K562 (cell line): ENCODE measurements at regions of chr2 and their contacts with region 1.

Region 1: GRCh38 chr2:85538486-85539360 is at the start of gene MAT2A:
- DNase-seq: peak; percentile 88 to 95 (median 91)
- ATAC-seq: peak; percentile 73
- H3K4me3 ChIP-seq: peak within 1 kb of the TSS; percentile 68
- H3K27ac ChIP-seq: peak within 1 kb of the TSS; percentile 100
- H3K4me1 ChIP-seq: peaks cover 9 to 24% of the 10 kb centered on the region in 2 experiments
- H3K27me3 ChIP-seq: no peaks in the 10 kb centered on the region
- CTCF ChIP-seq: peak; percentile 78 to 86 (median 82)
- EP300 ChIP-seq: peak; percentile 70
- POLR2A ChIP-seq: peak; percentile 100
- RAD21 ChIP-seq: peak; percentile 60 to 72
- polyA plus RNA-seq, gene MAT2A: 130 to 197 TPM

Region 2: GRCh38 chr2:85369500-85369899 is 169.2 kb before region 1 on chr2:
- CTCF ChIA-PET with region 1: no interaction called
- POLR2A ChIA-PET with region 1: interaction called, 17 read pairs
- in situ Hi-C with region 1: no loop called
- intact Hi-C with region 1: no loop called
- DNase-seq: no peak
- ATAC-seq: no peak
- H3K4me3 ChIP-seq: no peak overlapping the region
- H3K27ac ChIP-seq: no peak overlapping the region
- H3K4me1 ChIP-seq: no peaks in the 10 kb centered on the region
- H3K27me3 ChIP-seq: no peaks in the 10 kb centered on the region
- CTCF ChIP-seq: no peak
- EP300 ChIP-seq: no peak
- POLR2A ChIP-seq: no peak
- RAD21 ChIP-seq: no peak

Region 3: GRCh38 chr2:85437488-85438284 is 101.0 kb before region 1 on chr2:
- CTCF ChIA-PET with region 1: no interaction called
- POLR2A ChIA-PET with region 1: interaction called, 1,576 read pairs
- in situ Hi-C with region 1: no loop called
- intact Hi-C with region 1: loop called (anchors 5 kb)
- DNase-seq: peak; percentile 84 to 86 (median 86)
- ATAC-seq: peak; percentile 81
- H3K4me3 ChIP-seq: peak overlapping the region; percentile 32
- H3K27ac ChIP-seq: peak overlapping the region; percentile 79
- H3K4me1 ChIP-seq: peaks cover 28 to 52% of the 10 kb centered on the region in 2 experiments
- H3K27me3 ChIP-seq: no peaks in the 10 kb centered on the region
- CTCF ChIP-seq: no peak
- EP300 ChIP-seq: no peak; the same call in 1 of the 2 replicates
- POLR2A ChIP-seq: peak; percentile 42; the same call in 1 of the 2 replicates
- RAD21 ChIP-seq: no peak

Region 4: DNA sequence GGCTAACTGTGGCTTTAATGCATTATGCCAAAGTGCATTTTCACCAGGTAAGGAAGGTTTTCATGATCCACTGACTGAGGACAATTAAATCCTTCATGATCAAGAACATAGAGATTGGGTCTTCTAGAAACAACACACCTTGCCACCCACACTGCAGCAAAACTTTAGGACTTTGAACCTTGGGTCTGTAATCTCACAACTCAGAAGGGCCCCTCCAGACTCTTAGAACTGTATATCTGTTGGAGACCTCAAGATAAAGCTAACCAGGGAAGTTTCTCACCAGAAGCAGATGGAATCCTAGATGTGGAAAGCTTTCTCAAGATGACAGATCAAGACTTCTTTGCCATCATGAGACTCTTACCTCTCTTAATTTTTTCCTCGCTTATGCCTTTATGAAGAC is 42.3 kb before region 1 on chr2:
- CTCF ChIA-PET with region 1: no interaction called
- POLR2A ChIA-PET with region 1: interaction called, 59 read pairs
- in situ Hi-C with region 1: no loop called
- intact Hi-C with region 1: loop called (anchors 1 kb)
- DNase-seq: peak in 1 of 4 experiments; percentile 61
- ATAC-seq: peak; percentile 11
- H3K4me3 ChIP-seq: no peak overlapping the region
- H3K27ac ChIP-seq: peak overlapping the region; percentile 60
- H3K4me1 ChIP-seq: peaks cover 15 to 49% of the 10 kb centered on the region in 2 experiments
- H3K27me3 ChIP-seq: no peaks in the 10 kb centered on the region
- CTCF ChIP-seq: no peak
- EP300 ChIP-seq: peak; percentile 51; the same call in 1 of the 2 replicates
- POLR2A ChIP-seq: no peak
- RAD21 ChIP-seq: no peak

Region 5: GRCh38 chr2:85524336-85524933 is 14.3 kb before region 1 on chr2:
- CTCF ChIA-PET with region 1: no interaction called
- POLR2A ChIA-PET with region 1: interaction called, 96 read pairs
- in situ Hi-C with region 1: no loop called
- intact Hi-C with region 1: no loop called
- DNase-seq: peak in 3 of 4 experiments; percentile 20 to 72 (median 54)
- ATAC-seq: peak; percentile 93
- H3K4me3 ChIP-seq: no peak overlapping the region
- H3K27ac ChIP-seq: peak overlapping the region; percentile 65
- H3K4me1 ChIP-seq: peaks cover 26 to 27% of the 10 kb centered on the region in 2 experiments
- H3K27me3 ChIP-seq: no peaks in the 10 kb centered on the region
- CTCF ChIP-seq: no peak
- EP300 ChIP-seq: no peak
- POLR2A ChIP-seq: no peak
- RAD21 ChIP-seq: no peak

Region 6: DNA sequence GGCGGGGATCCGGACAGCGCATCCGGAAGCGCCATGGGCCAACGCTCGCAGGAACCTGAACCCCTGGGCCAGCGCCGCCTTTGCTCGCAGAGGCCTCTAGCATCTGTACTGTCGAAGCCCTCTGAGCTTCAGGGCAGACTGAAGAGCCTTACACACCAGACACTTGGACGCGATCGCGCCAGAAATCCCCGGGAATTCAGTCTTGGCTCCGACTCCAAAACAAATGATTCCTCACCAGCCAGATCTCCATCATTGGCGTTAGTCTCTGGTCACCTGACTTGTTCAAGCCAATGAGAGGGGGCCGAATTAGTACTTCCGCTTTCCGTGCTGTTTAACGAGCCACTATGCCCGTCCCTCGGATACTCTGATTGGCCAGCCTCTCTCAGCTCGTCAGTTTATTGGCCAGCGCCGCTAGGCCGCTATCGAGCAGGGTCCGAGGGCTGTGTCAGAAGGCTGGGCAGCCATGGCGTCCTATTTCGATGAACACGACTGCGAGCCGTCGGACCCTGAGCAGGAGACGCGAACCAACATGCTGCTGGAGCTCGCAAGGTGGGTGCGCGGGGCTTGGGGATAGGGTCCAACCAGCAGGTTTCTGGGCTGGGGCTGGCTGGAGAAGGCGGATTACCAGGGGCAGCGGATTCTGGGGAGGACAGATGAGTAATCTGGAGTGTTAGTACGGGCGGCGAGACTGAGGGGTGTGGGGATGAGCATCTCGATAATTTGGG is 56.7 kb after region 1 on chr2 and contains the start of gene RNF181:
- CTCF ChIA-PET with region 1: no interaction called
- POLR2A ChIA-PET with region 1: interaction called, 14 read pairs
- in situ Hi-C with region 1: no loop called
- intact Hi-C with region 1: no loop called
- DNase-seq: peak; percentile 94 to 99 (median 96)
- ATAC-seq: peak; percentile 98
- H3K4me3 ChIP-seq: peak within 1 kb of the TSS; percentile 62
- H3K27ac ChIP-seq: peak within 1 kb of the TSS; percentile 74
- H3K4me1 ChIP-seq: peaks cover 6 to 29% of the 10 kb centered on the region in 2 experiments
- H3K27me3 ChIP-seq: no peaks in the 10 kb centered on the region
- CTCF ChIP-seq: no peak
- EP300 ChIP-seq: no peak
- POLR2A ChIP-seq: peak; percentile 93
- RAD21 ChIP-seq: no peak
- polyA plus RNA-seq, gene RNF181: 425 to 485 TPM